ENCODE measurements at regions of chr6 and their contacts with region 1.

Region 1: GRCh38 chr6:18387061-18387721 is at the start of gene RNF144B:
- DNase-seq: peak; percentile 94
- ATAC-seq: peak; percentile 94
- H3K4me3 ChIP-seq: peak within 1 kb of the TSS; percentile 78
- H3K27ac ChIP-seq: peak within 1 kb of the TSS; percentile 74
- H3K4me1 ChIP-seq: peaks cover 37% of the 10 kb centered on the region
- H3K27me3 ChIP-seq: no peaks in the 10 kb centered on the region
- CTCF ChIP-seq: no peak
- total RNA-seq, gene RNF144B: 4.6 and 7.8 TPM in 2 replicates

Region 2: GRCh38 chr6:18148304-18149025 is 238.7 kb before region 1 on chr6:
- CTCF ChIA-PET with region 1: no interaction called
- POLR2A ChIA-PET with region 1: no interaction called
- intact Hi-C with region 1: loop called (anchors 10 kb)
- DNase-seq: peak; percentile 89
- ATAC-seq: peak; percentile 27
- H3K4me3 ChIP-seq: no peak overlapping the region
- H3K27ac ChIP-seq: peak overlapping the region; percentile 97
- H3K4me1 ChIP-seq: peaks cover 39% of the 10 kb centered on the region
- H3K27me3 ChIP-seq: no peaks in the 10 kb centered on the region
- CTCF ChIP-seq: no peak

Region 3: DNA sequence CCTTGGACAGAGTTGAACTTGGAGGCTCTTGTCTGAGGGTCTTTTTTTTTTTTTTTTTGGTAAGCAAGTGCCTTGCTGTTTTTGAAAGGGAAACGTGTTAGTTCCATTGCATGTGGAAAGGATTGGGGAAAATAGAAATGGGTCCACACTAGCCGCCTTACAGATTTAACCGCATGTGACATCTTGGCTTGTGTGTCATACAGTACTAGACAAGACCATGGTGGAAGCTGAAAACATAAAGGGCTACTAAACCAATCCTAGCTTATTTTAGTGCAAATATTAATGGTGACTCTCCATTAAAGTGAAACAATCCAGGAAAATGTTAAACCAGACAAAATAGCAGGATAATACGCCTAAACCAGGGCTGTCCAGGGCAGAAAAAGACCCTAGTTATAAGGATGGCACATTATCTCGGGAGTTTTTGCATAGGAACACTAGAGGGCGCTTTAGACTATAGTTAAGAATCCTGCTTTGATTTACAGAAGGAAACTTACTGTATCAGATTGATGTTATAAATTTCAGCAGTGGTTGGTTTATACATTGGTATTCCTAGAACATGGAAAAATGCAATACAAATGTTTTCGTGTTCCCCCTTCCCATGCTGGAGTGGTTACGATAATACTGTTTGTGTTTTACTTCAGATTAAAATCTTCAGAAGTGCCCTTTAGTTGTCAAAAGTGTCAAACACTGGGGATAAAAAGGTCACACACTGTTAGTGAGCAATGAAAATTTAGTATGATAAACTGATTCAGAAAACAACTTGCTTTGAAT is 63.1 kb before region 1 on chr6:
- CTCF ChIA-PET with region 1: no interaction called
- POLR2A ChIA-PET with region 1: no interaction called
- intact Hi-C with region 1: loop called (anchors 1 kb)
- DNase-seq: peak; percentile 78
- ATAC-seq: peak; percentile 72
- H3K4me3 ChIP-seq: no peak overlapping the region
- H3K27ac ChIP-seq: no peak overlapping the region
- H3K4me1 ChIP-seq: peaks cover 11% of the 10 kb centered on the region
- H3K27me3 ChIP-seq: no peaks in the 10 kb centered on the region
- CTCF ChIP-seq: peak; percentile 86

Region 4: GRCh38 chr6:18347826-18348225 is 39.4 kb before region 1 on chr6:
- CTCF ChIA-PET with region 1: interaction called, 4 read pairs
- POLR2A ChIA-PET with region 1: interaction called, 3 read pairs
- intact Hi-C with region 1: loop called (anchors 2 kb)
- DNase-seq: no peak
- ATAC-seq: no peak
- H3K4me3 ChIP-seq: no peak overlapping the region
- H3K27ac ChIP-seq: peak overlapping the region; percentile 88
- H3K4me1 ChIP-seq: peaks cover 37% of the 10 kb centered on the region
- H3K27me3 ChIP-seq: no peaks in the 10 kb centered on the region
- CTCF ChIP-seq: no peak

Region 5: GRCh38 chr6:18405477-18406293 is 18.5 kb after region 1 on chr6:
- CTCF ChIA-PET with region 1: no interaction called
- POLR2A ChIA-PET with region 1: no interaction called
- intact Hi-C with region 1: loop called (anchors 1 kb)
- DNase-seq: peak; percentile 96
- ATAC-seq: peak; percentile 98
- H3K4me3 ChIP-seq: peak overlapping the region; percentile 31; the same call in 1 of the 2 replicates
- H3K27ac ChIP-seq: peak overlapping the region; percentile 97
- H3K4me1 ChIP-seq: peaks cover 30% of the 10 kb centered on the region
- H3K27me3 ChIP-seq: no peaks in the 10 kb centered on the region
- CTCF ChIP-seq: no peak

Region 6: DNA sequence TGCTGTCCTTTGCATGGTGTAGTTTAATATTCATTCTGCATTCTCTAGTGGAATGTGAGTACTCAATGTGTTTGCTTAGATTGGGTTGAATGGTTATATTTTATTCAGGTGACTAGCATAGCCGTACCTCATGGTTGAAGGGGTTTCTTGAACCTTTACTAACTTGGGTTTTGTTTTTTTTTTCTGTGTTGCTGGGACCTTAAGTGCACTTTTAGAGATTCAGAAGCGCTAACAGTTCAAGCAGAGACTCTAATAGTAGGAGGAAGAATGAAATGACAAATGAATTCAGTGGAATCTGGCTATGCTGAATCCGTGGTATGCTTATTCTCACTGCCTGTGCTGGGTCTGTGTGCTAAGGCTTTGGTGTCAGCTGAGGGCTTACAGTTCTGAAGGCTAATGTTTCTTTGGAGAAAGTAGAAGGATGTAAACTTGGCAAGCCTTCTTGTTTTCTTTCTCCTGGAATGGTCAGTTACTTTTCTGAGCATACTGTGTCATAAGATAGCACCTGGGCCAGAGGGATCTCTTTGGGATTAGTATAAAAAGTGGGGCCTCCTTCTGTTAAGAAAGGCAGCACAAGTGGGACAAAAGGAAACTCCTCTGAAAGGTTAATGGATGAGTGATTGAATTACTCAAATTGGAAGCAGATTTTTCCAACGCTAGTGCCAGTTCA is 28.6 kb after region 1 on chr6:
- CTCF ChIA-PET with region 1: no interaction called
- POLR2A ChIA-PET with region 1: no interaction called
- intact Hi-C with region 1: no loop called
- DNase-seq: no peak
- ATAC-seq: no peak
- H3K4me3 ChIP-seq: no peak overlapping the region
- H3K27ac ChIP-seq: no peak overlapping the region
- H3K4me1 ChIP-seq: no peaks in the 10 kb centered on the region
- H3K27me3 ChIP-seq: no peaks in the 10 kb centered on the region
- CTCF ChIP-seq: no peak

Region 7: DNA sequence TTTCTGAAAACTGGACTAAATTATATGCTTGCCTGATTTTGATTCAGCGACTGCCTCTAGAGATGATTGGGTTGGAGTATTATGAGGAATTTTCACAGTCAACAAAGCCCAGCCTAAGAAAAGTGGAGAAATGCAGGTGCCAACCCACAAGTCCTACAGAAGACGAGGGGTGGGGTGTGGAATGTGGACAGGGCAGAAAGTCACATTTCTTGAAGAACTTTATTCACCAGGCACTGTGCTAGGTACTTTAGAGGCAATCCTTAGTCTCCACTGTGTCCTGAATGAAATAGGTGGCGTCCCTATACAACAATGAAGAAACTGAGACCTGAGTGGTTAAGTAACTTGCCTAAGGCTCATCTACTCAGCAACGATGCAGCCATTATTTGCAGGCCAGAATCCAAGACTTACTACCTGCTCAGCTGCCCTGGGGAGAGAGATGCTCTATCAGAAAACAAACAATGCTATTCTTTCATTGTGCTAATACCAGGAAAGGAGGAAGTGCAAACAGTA is 106.2 kb after region 1 on chr6:
- CTCF ChIA-PET with region 1: no interaction called
- POLR2A ChIA-PET with region 1: no interaction called
- intact Hi-C with region 1: loop called (anchors 1 kb)
- DNase-seq: peak; percentile 68
- ATAC-seq: peak; percentile 92
- H3K4me3 ChIP-seq: no peak overlapping the region
- H3K27ac ChIP-seq: peak overlapping the region; percentile 30
- H3K4me1 ChIP-seq: peaks cover 20% of the 10 kb centered on the region
- H3K27me3 ChIP-seq: no peaks in the 10 kb centered on the region
- CTCF ChIP-seq: no peak

Region 8: GRCh38 chr6:18595774-18596530 is 208.8 kb after region 1 on chr6:
- CTCF ChIA-PET with region 1: no interaction called
- POLR2A ChIA-PET with region 1: no interaction called
- intact Hi-C with region 1: no loop called
- DNase-seq: peak; percentile 85
- ATAC-seq: peak; percentile 86
- H3K4me3 ChIP-seq: no peak overlapping the region
- H3K27ac ChIP-seq: no peak overlapping the region
- H3K4me1 ChIP-seq: no peaks in the 10 kb centered on the region
- H3K27me3 ChIP-seq: peaks cover 35% of the 10 kb centered on the region
- CTCF ChIP-seq: peak; percentile 96

Region 9: GRCh38 chr6:18976966-18977365 is 589.8 kb after region 1 on chr6:
- CTCF ChIA-PET with region 1: no interaction called
- POLR2A ChIA-PET with region 1: interaction called, 13 read pairs
- intact Hi-C with region 1: no loop called
- DNase-seq: no peak
- ATAC-seq: no peak
- H3K4me3 ChIP-seq: no peak overlapping the region
- H3K27ac ChIP-seq: no peak overlapping the region
- H3K4me1 ChIP-seq: no peaks in the 10 kb centered on the region
- H3K27me3 ChIP-seq: peaks cover 68% of the 10 kb centered on the region
- CTCF ChIP-seq: no peak

Measured in PC-3 (cell line).